ENCODE measurements at regions of chrX and their contacts with region 1.

Region 1: GRCh38 chrX:123976706-123977316 is 15.3 kb downstream of the STAG2 start:
- DNase-seq: no peak
- H3K4me3 Mint-ChIP-seq: no peak overlapping the region
- H3K27ac Mint-ChIP-seq: no peak overlapping the region
- H3K4me1 Mint-ChIP-seq: peaks cover 15% of the 10 kb centered on the region
- H3K27me3 Mint-ChIP-seq: no peaks in the 10 kb centered on the region
- CTCF ChIP-seq: no peak

Region 2: GRCh38 chrX:123525123-123525725 is 451.6 kb before region 1 on chrX:
- CTCF ChIA-PET with region 1: no interaction called
- intact Hi-C with region 1: no loop called
- DNase-seq: no peak
- H3K4me3 Mint-ChIP-seq: no peak overlapping the region
- H3K27ac Mint-ChIP-seq: no peak overlapping the region
- H3K4me1 Mint-ChIP-seq: no peaks in the 10 kb centered on the region
- H3K27me3 Mint-ChIP-seq: peaks cover 11% of the 10 kb centered on the region
- CTCF ChIP-seq: no peak

Region 3: DNA sequence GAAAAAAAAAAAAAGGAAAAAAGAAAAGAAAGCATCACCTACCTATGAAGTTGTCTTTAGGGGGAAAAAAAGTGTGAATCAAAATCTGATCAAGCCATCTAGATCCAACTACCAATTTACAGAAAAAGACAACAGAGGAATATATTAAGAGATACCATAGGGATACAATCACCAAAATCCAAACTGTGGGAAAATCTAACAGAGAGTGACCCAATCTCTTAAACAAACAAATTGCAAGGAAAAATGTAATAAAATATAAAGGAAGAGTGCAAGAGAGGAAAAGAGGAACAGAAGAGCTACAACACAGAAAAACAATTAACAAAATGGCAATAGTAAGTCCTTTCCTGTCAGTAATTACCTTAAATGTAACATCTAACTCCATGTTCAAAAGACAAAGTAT is 263.0 kb before region 1 on chrX:
- CTCF ChIA-PET with region 1: no interaction called
- intact Hi-C with region 1: no loop called
- DNase-seq: no peak
- H3K4me3 Mint-ChIP-seq: no peak overlapping the region
- H3K27ac Mint-ChIP-seq: no peak overlapping the region
- H3K4me1 Mint-ChIP-seq: peaks cover 18% of the 10 kb centered on the region
- H3K27me3 Mint-ChIP-seq: no peaks in the 10 kb centered on the region
- CTCF ChIP-seq: no peak

Region 4: DNA sequence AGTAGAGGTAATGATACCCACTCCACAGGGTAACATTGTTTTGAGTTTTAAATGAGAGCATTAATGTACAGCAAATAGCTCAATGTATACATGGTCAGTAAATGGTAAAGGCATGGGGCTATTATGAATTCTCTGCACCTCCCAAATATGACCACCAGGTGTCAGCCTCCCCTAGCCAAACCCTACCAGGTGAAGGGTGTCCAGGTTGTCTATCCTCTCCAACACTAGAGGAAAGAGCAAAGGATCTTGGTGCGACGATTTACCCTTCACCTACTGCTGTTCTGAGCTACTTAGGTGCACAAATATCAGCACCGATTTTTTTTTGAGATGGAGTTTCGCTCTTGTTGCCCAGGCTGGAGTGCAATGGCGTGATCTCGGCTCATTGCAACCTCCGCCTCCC is 143.4 kb before region 1 on chrX:
- CTCF ChIA-PET with region 1: interaction called, 18 read pairs
- intact Hi-C with region 1: no loop called
- DNase-seq: peak; percentile 70
- H3K4me3 Mint-ChIP-seq: peak overlapping the region; percentile 21
- H3K27ac Mint-ChIP-seq: no peak overlapping the region
- H3K4me1 Mint-ChIP-seq: peaks cover 45% of the 10 kb centered on the region
- H3K27me3 Mint-ChIP-seq: no peaks in the 10 kb centered on the region
- CTCF ChIP-seq: peak; percentile 52

Region 5: GRCh38 chrX:123859846-123860838 is 116.7 kb before region 1 on chrX and contains the start of gene XIAP:
- CTCF ChIA-PET with region 1: interaction called, 10 read pairs
- intact Hi-C with region 1: no loop called
- DNase-seq: peak; percentile 90
- H3K4me3 Mint-ChIP-seq: peak within 1 kb of the TSS; percentile 73
- H3K27ac Mint-ChIP-seq: peak within 1 kb of the TSS; percentile 86
- H3K4me1 Mint-ChIP-seq: peaks cover 18% of the 10 kb centered on the region
- H3K27me3 Mint-ChIP-seq: no peaks in the 10 kb centered on the region
- CTCF ChIP-seq: no peak
- total RNA-seq, gene XIAP: 62.8 and 75.0 TPM in 2 replicates

Region 6: DNA sequence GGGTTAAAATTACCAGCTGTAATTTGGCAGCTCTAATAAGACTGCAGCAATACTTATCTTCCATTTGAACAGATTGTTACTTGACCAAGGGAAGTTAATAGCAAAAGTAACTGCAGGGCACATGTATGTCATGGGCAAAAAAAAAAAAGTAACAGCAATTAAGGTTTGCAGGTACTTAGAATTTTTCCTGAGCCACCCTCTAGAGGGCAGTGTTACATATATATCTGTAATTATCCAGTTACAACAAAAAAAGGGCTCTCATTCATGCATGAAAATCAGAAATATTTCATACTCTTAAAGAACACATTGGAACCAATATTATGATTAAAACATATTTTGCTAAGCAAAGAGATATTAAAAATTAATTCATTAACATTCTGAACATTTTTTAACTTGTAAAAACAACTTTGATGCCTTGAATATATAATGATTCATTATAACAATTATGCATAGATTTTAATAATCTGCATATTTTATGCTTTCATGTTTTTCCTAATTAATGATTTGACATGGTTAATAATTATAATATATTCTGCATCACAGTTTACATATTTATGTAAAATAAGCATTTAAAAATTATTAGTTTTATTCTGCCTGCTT is 91.9 kb before region 1 on chrX:
- CTCF ChIA-PET with region 1: no interaction called
- intact Hi-C with region 1: loop called (anchors 10 kb)
- DNase-seq: peak; percentile 42
- H3K4me3 Mint-ChIP-seq: no peak overlapping the region
- H3K27ac Mint-ChIP-seq: no peak overlapping the region
- H3K4me1 Mint-ChIP-seq: peaks cover 12% of the 10 kb centered on the region
- H3K27me3 Mint-ChIP-seq: no peaks in the 10 kb centered on the region
- CTCF ChIP-seq: peak; percentile 31

Region 7: DNA sequence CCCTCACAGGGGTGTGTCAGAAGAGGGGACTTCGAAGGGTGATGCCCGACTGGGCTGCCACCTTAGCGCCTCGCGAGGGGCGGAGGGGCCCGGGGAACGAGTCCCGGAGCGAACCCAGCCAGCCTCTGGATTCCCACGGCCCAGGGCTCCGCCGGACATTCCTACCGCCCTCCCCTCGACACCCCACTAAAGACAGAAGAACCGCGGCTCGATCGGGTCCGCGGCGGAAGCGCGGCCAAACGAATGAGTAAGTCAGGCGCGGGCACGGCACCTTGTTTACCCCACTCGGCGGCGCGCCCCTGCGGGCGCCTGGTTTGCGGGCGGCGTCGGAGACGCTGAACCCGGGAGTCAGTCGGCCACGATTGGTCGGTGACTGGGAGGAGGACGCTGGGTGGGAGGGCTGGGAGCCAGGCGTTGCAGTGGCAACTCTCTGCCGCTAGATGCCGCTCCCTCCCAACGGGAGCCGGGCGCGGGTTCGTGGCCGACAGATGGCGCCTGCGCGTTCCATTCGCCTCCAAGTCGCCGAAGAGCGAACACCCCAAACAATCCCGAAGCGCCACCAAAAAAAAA is 16.7 kb before region 1 on chrX:
- CTCF ChIA-PET with region 1: interaction called, 26 read pairs
- intact Hi-C with region 1: loop called (anchors 2 kb)
- DNase-seq: peak; percentile 90
- H3K4me3 Mint-ChIP-seq: peak overlapping the region; percentile 97
- H3K27ac Mint-ChIP-seq: peak overlapping the region; percentile 100
- H3K4me1 Mint-ChIP-seq: peaks cover 9% of the 10 kb centered on the region
- H3K27me3 Mint-ChIP-seq: no peaks in the 10 kb centered on the region
- CTCF ChIP-seq: peak; percentile 95

Region 8: GRCh38 chrX:124211312-124211942 is 234.6 kb after region 1 on chrX:
- CTCF ChIA-PET with region 1: no interaction called
- intact Hi-C with region 1: no loop called
- DNase-seq: peak; percentile 15
- H3K4me3 Mint-ChIP-seq: no peak overlapping the region
- H3K27ac Mint-ChIP-seq: no peak overlapping the region
- H3K4me1 Mint-ChIP-seq: no peaks in the 10 kb centered on the region
- H3K27me3 Mint-ChIP-seq: peaks cover 18% of the 10 kb centered on the region
- CTCF ChIP-seq: peak; percentile 29

Measured in Calu3 (cell line).